Adrenal gland (tissue), 19 donors: ENCODE measurements at regions of chr6 and their contacts with region 1.

Region 1: GRCh38 chr6:31739639-31740396 is at the start of gene MSH5:
- DNase-seq: peak; percentile 98 to 100 (median 99)
- H3K4me3 ChIP-seq: peak within 1 kb of the TSS in 3 of 4 donors; percentile 59 to 84 (median 63)
- H3K27ac ChIP-seq: peak within 1 kb of the TSS in 3 of 5 donors; percentile 30 to 65 (median 60)
- H3K4me1 ChIP-seq: peaks cover 10 to 41% of the 10 kb centered on the region in 2 donors
- H3K27me3 ChIP-seq: no peaks in the 10 kb centered on the region
- CTCF ChIP-seq: no peak
- POLR2A ChIP-seq: peak in 1 of 2 donors; percentile 8
- total RNA-seq, gene MSH5: 3.0 to 16.7 (median 5.9) TPM

Region 2: GRCh38 chr6:31509988-31510387 is 229.8 kb before region 1 on chr6:
- intact Hi-C with region 1: no loop called
- DNase-seq: no peak
- H3K4me3 ChIP-seq: no peak overlapping the region
- H3K27ac ChIP-seq: no peak overlapping the region
- H3K4me1 ChIP-seq: no peaks in the 10 kb centered on the region
- H3K27me3 ChIP-seq: no peaks in the 10 kb centered on the region
- CTCF ChIP-seq: no peak
- POLR2A ChIP-seq: no peak

Region 3: DNA sequence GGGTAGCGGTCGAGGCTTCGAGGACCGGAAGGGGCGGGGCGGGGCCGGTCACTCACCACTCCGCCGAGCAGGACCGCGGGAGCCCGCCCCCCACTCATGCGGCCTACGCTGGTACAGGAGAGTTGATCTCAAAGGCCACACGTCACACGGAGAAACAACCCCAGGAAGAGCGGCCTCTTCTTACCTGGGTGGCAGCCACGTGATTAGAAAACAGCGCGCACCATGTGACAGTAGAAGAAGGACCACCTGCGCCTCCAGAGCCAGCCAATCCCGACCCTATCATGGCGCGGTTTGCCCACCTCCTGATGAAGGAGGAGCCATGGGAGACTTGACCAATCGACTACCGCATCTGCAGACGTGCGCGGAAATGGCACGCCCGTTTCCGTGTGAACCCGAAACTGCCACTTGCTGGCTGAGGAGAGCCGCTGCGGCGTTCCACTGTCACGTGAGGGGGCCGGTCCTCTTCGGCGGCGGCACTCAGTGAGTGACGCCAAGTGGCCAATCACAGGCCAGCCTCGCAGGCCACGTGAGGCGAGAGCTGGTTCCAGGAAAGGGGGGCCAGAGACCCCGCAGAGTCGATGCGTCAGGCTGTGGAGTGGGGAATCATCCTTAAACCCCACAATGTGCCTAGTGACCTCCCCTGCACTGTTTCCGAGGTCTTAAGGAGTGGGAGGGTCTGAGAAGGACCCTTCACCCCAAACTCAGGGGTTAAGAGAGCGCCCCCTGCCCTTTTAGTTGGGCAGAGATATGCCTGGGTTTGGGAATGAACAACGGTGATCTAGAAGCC is 1678.3 kb after region 1 on chr6 and contains the start of gene CUTA:
- intact Hi-C with region 1: loop called in 1 of 2 experiments (anchors 10 kb)
- DNase-seq: peak; percentile 99 to 100 (median 100)
- H3K4me3 ChIP-seq: peak within 1 kb of the TSS; percentile 47 to 83 (median 65)
- H3K27ac ChIP-seq: peak within 1 kb of the TSS; percentile 86 to 95 (median 90)
- H3K4me1 ChIP-seq: peaks cover 26 to 42% of the 10 kb centered on the region in 2 donors
- H3K27me3 ChIP-seq: no peaks in the 10 kb centered on the region
- CTCF ChIP-seq: peak in 3 of 6 experiments; percentile 22 to 33 (median 24)
- POLR2A ChIP-seq: peak; percentile 74 to 83
- total RNA-seq, gene CUTA: 202 to 437 (median 301) TPM